Activated B cell treated with CpG ODN at 0.5 μM for 24 hours (primary cell): ENCODE measurements at regions of chr2 and their contacts with region 1.

Region 1: DNA sequence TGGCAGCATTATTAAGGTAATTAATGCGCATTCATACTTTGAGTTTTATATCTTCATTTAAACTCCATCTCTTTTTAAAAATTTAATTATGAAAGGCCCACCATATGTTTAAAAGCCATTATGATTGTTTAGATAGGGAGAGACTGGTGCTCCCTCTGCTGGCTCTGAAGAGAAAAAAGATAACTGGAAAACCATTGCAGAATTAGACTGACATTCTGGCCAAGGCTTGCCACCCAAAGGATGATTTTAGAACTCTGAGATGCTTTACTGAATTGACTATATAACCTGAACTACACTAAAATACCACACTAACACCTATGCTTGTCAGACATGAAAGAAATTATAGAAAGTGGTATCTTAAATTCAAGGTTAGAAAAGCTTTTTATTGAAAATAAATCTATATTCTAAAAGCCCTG is 127.6 kb upstream of the SPOPL start:
- DNase-seq: no peak
- ATAC-seq: no peak
- H3K4me3 Mint-ChIP-seq: no peak overlapping the region
- H3K27ac Mint-ChIP-seq: no peak overlapping the region
- H3K4me1 Mint-ChIP-seq: no peaks in the 10 kb centered on the region
- H3K27me3 Mint-ChIP-seq: no peaks in the 10 kb centered on the region
- CTCF ChIP-seq: no peak

Region 2: DNA sequence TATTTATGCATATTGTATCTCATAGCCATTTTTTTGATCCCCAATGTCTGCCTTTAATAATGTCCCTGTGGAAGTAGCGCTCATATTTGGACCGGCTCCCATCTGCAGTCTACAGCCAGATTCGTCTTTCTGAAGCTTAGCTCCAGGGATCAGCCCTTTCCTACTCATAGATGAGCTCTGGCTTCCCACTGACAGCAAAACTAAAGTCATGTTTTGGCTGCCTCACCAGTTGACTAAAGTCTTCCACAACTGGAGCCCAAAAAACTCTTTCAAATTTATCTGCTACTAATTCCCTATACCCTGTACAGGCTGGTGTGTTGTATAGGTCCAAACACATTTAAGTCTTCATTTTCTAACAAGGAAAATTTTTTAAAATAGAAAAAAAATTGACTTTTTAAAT is 703.9 kb before region 1 on chr2:
- CTCF ChIA-PET with region 1: no interaction called
- POLR2A ChIA-PET with region 1: no interaction called
- intact Hi-C with region 1: no loop called
- DNase-seq: no peak
- ATAC-seq: no peak
- H3K4me3 Mint-ChIP-seq: no peak overlapping the region
- H3K27ac Mint-ChIP-seq: no peak overlapping the region
- H3K4me1 Mint-ChIP-seq: no peaks in the 10 kb centered on the region
- H3K27me3 Mint-ChIP-seq: no peaks in the 10 kb centered on the region
- CTCF ChIP-seq: no peak

Region 3: DNA sequence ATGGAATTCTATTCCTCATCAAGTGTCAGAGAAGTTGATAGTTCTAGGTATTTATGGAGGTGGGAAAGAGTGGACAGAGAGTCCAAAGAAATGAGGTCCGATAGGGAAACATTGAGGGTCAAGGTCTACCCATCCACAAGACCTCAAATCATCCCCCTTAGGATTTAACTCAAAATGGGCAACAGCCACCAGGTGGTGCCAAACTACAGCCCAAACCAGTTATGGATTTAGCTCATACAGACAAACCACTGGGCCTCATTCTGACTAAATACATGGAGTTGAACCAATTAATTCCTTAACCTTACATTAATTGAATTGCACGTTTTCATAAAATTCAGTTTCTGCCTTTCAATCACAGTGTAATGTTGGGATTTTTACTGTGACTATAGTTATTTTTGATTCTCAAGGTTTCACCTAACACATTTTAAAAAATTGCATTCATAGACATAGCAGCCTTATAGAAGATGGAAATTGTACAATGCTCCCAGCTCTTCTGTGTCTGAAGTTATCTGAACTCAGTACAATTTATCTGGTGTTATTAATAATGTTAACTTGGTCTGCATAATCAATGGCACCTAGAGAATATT is 508.0 kb before region 1 on chr2:
- CTCF ChIA-PET with region 1: interaction called, 3 read pairs
- POLR2A ChIA-PET with region 1: no interaction called
- intact Hi-C with region 1: loop called (anchors 1 kb)
- DNase-seq: peak; percentile 19
- ATAC-seq: peak; percentile 28
- H3K4me3 Mint-ChIP-seq: no peak overlapping the region
- H3K27ac Mint-ChIP-seq: no peak overlapping the region
- H3K4me1 Mint-ChIP-seq: no peaks in the 10 kb centered on the region
- H3K27me3 Mint-ChIP-seq: no peaks in the 10 kb centered on the region
- CTCF ChIP-seq: no peak

Region 4: GRCh38 chr2:137910641-137911040 is 463.4 kb before region 1 on chr2:
- CTCF ChIA-PET with region 1: interaction called, 3 read pairs
- POLR2A ChIA-PET with region 1: no interaction called
- intact Hi-C with region 1: loop called (anchors 1 kb)
- DNase-seq: no peak
- ATAC-seq: no peak
- H3K4me3 Mint-ChIP-seq: no peak overlapping the region
- H3K27ac Mint-ChIP-seq: no peak overlapping the region
- H3K4me1 Mint-ChIP-seq: no peaks in the 10 kb centered on the region
- H3K27me3 Mint-ChIP-seq: peaks cover 2% of the 10 kb centered on the region
- CTCF ChIP-seq: no peak

Region 5: GRCh38 chr2:137947728-137948336 is 426.2 kb before region 1 on chr2:
- CTCF ChIA-PET with region 1: no interaction called
- POLR2A ChIA-PET with region 1: no interaction called
- intact Hi-C with region 1: loop called (anchors 1 kb)
- DNase-seq: no peak
- ATAC-seq: no peak
- H3K4me3 Mint-ChIP-seq: no peak overlapping the region
- H3K27ac Mint-ChIP-seq: no peak overlapping the region
- H3K4me1 Mint-ChIP-seq: peaks cover 7% of the 10 kb centered on the region
- H3K27me3 Mint-ChIP-seq: no peaks in the 10 kb centered on the region
- CTCF ChIP-seq: no peak

Region 6: DNA sequence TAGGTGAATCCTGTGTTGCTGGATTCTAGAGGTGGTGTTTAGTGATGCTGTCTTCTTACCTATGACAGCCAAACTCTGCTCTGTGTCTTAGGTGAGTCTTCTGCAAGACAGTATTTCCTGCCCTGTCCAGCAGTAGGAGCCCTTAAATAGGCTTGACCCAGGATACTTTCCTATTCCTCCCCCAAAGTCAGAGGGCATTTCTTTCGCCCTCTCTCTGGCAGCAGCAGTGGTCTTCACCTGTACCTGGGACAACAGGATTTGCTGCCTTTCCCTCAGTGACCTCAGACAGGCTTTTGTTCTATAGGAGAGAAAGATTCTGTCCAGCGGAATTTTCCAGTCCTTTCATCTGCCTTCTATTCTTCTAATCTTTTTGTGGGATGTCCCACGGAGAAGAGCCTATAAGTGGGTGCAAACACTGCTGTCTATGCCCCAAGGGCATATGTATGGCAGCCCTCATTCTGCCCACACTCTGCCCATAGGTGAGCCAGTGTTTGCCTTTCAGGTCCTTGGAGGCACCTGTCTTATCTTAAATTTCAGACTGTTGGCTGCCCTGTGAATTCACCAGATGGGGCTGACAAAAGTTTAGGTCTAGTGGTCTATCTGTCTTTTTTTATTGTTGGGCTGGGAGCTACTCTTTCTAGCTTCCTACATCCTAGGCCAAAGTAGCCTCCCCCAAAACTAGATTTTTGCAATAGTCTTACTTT is 49.8 kb before region 1 on chr2:
- CTCF ChIA-PET with region 1: no interaction called
- POLR2A ChIA-PET with region 1: no interaction called
- intact Hi-C with region 1: no loop called
- DNase-seq: no peak
- ATAC-seq: no peak
- H3K4me3 Mint-ChIP-seq: no peak overlapping the region
- H3K27ac Mint-ChIP-seq: no peak overlapping the region
- H3K4me1 Mint-ChIP-seq: no peaks in the 10 kb centered on the region
- H3K27me3 Mint-ChIP-seq: no peaks in the 10 kb centered on the region
- CTCF ChIP-seq: no peak